ENCODE measurements at regions of chr1 and their contacts with region 1.

Region 1: GRCh38 chr1:160629286-160630210 is 17.3 kb downstream of the SLAMF1 start:
- DNase-seq: peak; percentile 83
- ATAC-seq: peak; percentile 22
- H3K4me3 Mint-ChIP-seq: peak overlapping the region; percentile 65
- H3K27ac Mint-ChIP-seq: peak overlapping the region; percentile 99
- H3K4me1 Mint-ChIP-seq: peaks cover 97% of the 10 kb centered on the region
- H3K27me3 Mint-ChIP-seq: no peaks in the 10 kb centered on the region

Region 2: GRCh38 chr1:160575112-160575664 is 54.4 kb before region 1 on chr1:
- CTCF ChIA-PET with region 1: interaction called, 4 read pairs
- POLR2A ChIA-PET with region 1: no interaction called
- intact Hi-C with region 1: loop called in 1 of 2 experiments (anchors 1 kb)
- DNase-seq: peak; percentile 28
- ATAC-seq: peak; percentile 50
- H3K4me3 Mint-ChIP-seq: peak overlapping the region; percentile 77
- H3K27ac Mint-ChIP-seq: peak overlapping the region; percentile 96
- H3K4me1 Mint-ChIP-seq: peaks cover 89% of the 10 kb centered on the region
- H3K27me3 Mint-ChIP-seq: no peaks in the 10 kb centered on the region

Region 3: DNA sequence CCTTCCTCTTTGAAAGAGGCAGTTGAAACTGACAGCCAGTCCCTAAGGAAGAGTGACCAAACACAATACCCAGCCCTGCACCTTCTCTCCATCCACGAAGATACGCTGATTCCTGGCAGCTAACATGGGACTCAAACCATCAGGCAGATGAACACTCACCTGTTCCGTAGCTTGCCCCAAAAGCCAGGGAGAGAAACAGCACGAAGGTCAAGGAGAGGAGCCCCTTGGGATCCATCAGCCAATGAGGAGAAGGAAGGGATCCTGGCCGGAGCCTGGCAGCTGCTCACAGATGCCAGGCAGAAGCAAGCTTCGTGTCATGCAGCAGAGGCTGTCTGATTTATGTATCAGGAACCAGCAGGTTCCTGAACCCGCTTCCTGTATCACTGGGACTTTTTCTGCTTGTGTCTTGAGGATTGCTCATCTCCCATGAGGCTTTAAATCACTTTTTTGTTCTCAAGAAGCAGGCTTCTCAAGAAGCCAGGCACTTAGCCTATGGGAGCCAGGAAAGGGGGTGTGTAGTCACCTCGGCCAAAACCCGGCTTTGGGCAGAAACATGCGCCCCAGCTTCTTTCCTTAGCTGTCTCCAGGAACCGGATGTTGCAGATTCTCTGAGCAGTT is 17.3 kb after region 1 on chr1 and contains the start of gene SLAMF1:
- CTCF ChIA-PET with region 1: interaction called, 16 read pairs
- POLR2A ChIA-PET with region 1: interaction called, 10 read pairs
- intact Hi-C with region 1: no loop called
- DNase-seq: peak; percentile 81
- ATAC-seq: peak; percentile 81
- H3K4me3 Mint-ChIP-seq: peak within 1 kb of the TSS; percentile 93
- H3K27ac Mint-ChIP-seq: peak within 1 kb of the TSS; percentile 92
- H3K4me1 Mint-ChIP-seq: peaks cover 56% of the 10 kb centered on the region
- H3K27me3 Mint-ChIP-seq: no peaks in the 10 kb centered on the region
- total RNA-seq, gene SLAMF1: 103 to 108 TPM

Region 4: GRCh38 chr1:160711602-160712311 is 82.2 kb after region 1 on chr1 and contains the start of gene CD48:
- CTCF ChIA-PET with region 1: interaction called, 3 read pairs
- POLR2A ChIA-PET with region 1: no interaction called
- intact Hi-C with region 1: loop called in 1 of 2 experiments (anchors 2 kb)
- DNase-seq: peak; percentile 70
- ATAC-seq: peak; percentile 40
- H3K4me3 Mint-ChIP-seq: no peak within 1 kb of the TSS
- H3K27ac Mint-ChIP-seq: no peak within 1 kb of the TSS
- H3K4me1 Mint-ChIP-seq: peaks cover 34% of the 10 kb centered on the region
- H3K27me3 Mint-ChIP-seq: no peaks in the 10 kb centered on the region
- total RNA-seq, gene CD48: 180 to 217 TPM

Region 5: DNA sequence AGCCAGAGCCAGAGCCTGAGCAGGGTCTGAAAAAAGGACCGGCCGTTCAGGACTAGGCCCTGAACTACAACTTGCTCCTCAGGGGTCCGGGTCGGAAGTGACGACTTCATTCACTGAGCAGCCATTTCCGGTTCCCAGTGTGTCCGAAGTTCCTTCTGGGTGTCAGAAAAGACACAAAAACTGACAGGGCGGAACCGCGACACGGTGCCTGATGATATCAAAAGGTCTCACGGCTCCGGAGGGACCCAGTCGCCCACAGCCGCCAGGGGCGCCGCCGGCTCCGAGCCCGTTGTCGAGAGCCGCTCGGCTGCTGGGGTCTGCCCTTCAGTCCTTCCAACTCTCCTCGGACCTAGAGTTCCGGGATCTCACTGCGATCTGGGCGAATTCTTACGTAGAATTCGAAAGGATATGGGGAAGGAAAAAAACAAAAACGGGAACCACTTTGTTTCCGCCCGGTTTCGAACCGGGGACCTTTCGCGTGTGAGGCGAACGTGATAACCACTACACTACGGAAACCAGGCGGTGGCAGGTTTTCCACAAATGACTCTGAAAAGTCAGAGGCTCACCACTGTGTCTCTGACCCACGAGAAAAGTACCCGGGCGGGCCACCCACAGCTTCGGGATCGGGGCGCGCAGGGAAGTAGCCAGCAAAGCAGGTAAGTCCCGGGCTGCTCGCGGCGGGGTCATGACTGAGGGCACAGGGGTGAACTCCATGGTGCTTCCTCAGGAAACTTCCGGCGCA is 769.9 kb after region 1 on chr1:
- CTCF ChIA-PET with region 1: no interaction called
- POLR2A ChIA-PET with region 1: no interaction called
- intact Hi-C with region 1: loop called in 1 of 2 experiments (anchors 2 kb)
- DNase-seq: peak; percentile 92
- ATAC-seq: peak; percentile 83
- H3K4me3 Mint-ChIP-seq: peak overlapping the region; percentile 89
- H3K27ac Mint-ChIP-seq: peak overlapping the region; percentile 100
- H3K4me1 Mint-ChIP-seq: peaks cover 34% of the 10 kb centered on the region
- H3K27me3 Mint-ChIP-seq: peaks cover 9% of the 10 kb centered on the region